ENCODE measurements at regions of chr20 and their contacts with region 1.

Region 1: GRCh38 chr20:45223136-45223535 is 2.0 kb downstream of the SEMG2 start:
- DNase-seq: no peak
- H3K4me3 Mint-ChIP-seq: no peak overlapping the region
- H3K27ac Mint-ChIP-seq: no peak overlapping the region
- H3K4me1 Mint-ChIP-seq: no peaks in the 10 kb centered on the region
- H3K27me3 Mint-ChIP-seq: peaks cover 63% of the 10 kb centered on the region
- CTCF ChIP-seq: no peak

Region 2: DNA sequence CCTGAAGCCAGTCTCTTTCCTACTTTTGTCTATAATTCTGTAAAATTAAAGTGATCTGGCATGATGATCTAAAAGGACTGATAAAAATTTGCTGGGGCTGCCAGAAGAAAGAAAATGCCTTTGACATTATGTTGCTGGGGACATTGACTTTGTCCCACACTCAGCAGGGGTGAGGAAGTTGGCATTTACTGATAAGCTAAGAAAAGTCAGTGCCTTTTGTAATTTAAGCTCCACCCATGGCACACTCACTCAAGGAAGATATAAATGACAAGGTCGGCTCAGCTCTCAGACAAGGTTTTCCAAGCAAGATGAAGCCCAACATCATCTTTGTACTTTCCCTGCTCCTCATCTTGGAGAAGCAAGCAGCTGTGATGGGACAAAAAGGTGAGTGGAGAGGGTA is 16.4 kb before region 1 on chr20 and contains the start of gene SEMG1:
- CTCF ChIA-PET with region 1: no interaction called
- POLR2A ChIA-PET with region 1: interaction called, 5 read pairs
- intact Hi-C with region 1: loop called (anchors 1 kb)
- DNase-seq: no peak
- H3K4me3 Mint-ChIP-seq: no peak within 1 kb of the TSS
- H3K27ac Mint-ChIP-seq: no peak within 1 kb of the TSS
- H3K4me1 Mint-ChIP-seq: no peaks in the 10 kb centered on the region
- H3K27me3 Mint-ChIP-seq: peaks cover 83% of the 10 kb centered on the region
- CTCF ChIP-seq: no peak
- total RNA-seq, gene SEMG1: not detected in 2 replicates